Activated naive CD4-positive, alpha-beta T cell treated with anti-CD3 and anti-CD28 coated beads, Interleukin-2, amount 10 ng/mL, durations not matched to agents 7 days and 5 days (primary cell): ENCODE measurements at regions of chr3 and their contacts with region 1.

Region 1: DNA sequence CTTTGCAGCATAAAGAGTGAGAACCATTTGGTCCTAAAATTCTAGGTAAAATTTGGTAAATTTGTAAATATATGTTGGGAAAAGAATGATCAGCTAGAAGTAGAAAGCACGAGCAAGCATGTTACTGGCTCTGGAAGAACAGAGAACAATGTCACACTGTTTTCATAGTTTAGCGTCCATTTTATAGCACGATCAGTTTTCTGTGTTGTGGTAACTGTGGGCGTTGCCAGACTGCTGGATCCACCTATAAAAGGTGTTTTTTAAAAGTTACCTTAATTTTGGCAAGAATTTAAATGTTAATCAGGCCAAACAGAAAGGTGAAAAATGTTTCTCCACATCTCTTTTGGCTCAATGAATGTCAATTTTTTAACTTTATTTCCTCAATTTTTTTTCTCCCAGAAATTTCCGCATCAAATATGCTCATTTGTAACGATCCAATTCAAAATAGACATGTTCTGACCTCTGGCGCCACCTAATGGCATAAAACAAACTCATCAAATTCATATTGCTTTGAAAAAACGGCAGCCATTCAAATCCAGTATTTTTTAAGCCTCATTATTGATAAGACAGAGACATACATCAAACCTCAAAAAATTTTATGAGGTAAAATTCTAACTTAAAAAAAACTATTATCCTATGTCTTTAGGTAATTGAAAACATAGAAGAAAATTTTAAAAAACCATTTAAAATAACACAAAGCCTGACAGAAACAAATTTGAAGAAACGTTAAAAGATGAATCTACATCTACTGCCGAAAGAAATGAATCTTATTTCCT is 5.5 kb upstream of the GP5 start:
- DNase-seq: peak; percentile 53
- H3K4me3 Mint-ChIP-seq: no peak overlapping the region
- H3K27ac Mint-ChIP-seq: no peak overlapping the region
- H3K4me1 Mint-ChIP-seq: peaks cover 14% of the 10 kb centered on the region
- H3K27me3 Mint-ChIP-seq: no peaks in the 10 kb centered on the region

Region 2: DNA sequence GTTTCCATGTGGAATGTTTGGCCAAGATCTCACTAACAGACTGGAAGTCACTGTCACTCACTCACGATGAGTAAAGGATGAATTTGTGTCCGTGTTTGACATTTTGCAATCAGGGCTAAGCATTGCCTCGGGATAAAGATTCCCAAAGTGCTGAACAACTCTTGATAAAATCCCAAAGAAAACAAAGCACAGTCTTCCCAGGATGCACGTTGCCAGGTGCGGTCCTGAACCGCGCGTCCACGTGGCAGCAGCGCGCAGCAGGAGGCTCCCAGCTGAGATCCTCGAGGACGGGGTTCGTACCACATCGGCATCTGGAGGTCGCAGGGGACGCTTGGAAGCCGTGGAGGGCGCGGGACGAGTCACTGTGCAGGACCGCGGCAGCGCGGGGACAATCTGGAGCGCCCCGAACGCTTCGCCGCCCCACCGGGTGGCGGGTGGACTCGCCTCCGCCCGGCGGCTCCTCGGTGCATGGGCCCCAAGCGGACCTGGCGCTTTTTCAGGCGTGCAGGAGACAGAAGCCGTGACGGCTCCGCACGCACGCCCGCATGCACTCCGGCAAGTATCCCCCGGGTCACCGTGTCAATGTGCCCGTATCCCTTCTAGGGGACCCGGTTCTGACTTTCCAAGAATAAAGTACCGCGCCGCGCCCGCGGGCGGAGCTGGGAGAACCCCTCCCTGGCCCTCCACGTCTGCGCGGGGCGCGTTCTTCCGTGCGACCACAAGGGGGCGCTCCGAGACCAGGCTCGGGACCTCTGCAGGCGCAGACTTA is 71.2 kb before region 1 on chr3:
- CTCF ChIA-PET with region 1: interaction called, 167 read pairs
- DNase-seq: peak; percentile 91
- H3K4me3 Mint-ChIP-seq: peak overlapping the region; percentile 71
- H3K27ac Mint-ChIP-seq: no peak overlapping the region
- H3K4me1 Mint-ChIP-seq: peaks cover 13% of the 10 kb centered on the region
- H3K27me3 Mint-ChIP-seq: peaks cover 82% of the 10 kb centered on the region

Region 3: DNA sequence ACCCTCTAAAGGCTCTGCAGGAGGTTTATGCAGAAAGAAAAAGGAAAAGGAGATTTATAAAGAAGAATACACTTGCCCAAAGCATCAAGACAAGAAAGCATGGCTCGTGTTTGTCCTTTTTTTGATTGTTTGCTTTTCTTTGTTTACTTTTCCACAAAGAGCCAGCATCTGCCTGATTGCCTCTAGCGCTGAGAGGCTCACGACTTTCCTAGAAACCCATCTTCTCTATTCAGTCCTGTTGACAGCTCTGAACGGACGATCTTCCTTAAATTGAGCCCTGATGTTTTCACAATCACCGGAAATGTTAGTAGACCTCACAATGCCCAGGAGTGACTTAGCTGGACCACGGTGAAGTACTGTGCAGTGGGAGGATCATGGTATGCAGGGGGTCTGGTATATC is 17.9 kb before region 1 on chr3:
- CTCF ChIA-PET with region 1: no interaction called
- DNase-seq: no peak
- H3K4me3 Mint-ChIP-seq: no peak overlapping the region
- H3K27ac Mint-ChIP-seq: no peak overlapping the region
- H3K4me1 Mint-ChIP-seq: no peaks in the 10 kb centered on the region
- H3K27me3 Mint-ChIP-seq: peaks cover 50% of the 10 kb centered on the region